ENCODE measurements at regions of chr5 and their contacts with region 1.

Region 1: DNA sequence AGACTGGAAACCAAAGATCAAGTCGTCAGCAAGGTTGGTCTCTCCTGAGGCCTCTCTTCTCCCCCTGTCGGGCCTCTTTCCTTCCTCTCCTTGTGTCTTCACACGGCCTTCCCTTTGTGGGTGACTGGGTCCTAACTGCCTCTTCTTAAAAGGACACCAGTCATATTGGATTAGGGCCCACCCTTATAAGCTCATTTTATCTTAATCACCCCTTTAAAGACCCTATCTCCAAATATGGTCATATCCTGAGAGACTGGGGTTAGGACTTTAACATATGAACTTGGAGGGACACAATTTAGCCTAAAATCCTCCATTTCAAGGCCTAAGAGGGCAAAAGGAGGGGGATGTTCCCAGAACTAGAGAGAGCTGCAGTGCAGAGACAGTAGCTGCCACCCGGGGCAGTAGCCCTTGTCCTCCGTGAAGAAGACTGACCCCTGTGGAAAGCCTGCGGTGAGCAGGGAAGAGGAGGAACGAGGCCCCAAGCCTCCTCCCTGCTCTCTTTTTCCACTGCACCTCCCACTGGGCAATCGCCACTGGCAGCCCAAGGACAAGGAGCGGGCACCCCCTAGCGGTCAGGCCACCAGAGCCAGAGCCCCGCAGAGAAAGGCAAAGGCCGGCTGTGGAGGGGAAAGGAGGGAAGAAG is 34.9 kb downstream of the CFAP90 start:
- DNase-seq: peak; percentile 80
- H3K4me3 ChIP-seq: peak overlapping the region in 1 of 2 experiments; percentile 51; a peak in 1 of 4 replicates
- H3K27ac ChIP-seq: no peak overlapping the region
- H3K4me1 ChIP-seq: no peaks in the 10 kb centered on the region; a peak in 1 of 4 replicates
- H3K27me3 ChIP-seq: peaks cover 58% of the 10 kb centered on the region; the same call in 1 of the 2 replicates
- CTCF ChIP-seq: peak; percentile 75
- EP300 ChIP-seq: no peak
- RAD21 ChIP-seq: peak; percentile 65

Region 2: DNA sequence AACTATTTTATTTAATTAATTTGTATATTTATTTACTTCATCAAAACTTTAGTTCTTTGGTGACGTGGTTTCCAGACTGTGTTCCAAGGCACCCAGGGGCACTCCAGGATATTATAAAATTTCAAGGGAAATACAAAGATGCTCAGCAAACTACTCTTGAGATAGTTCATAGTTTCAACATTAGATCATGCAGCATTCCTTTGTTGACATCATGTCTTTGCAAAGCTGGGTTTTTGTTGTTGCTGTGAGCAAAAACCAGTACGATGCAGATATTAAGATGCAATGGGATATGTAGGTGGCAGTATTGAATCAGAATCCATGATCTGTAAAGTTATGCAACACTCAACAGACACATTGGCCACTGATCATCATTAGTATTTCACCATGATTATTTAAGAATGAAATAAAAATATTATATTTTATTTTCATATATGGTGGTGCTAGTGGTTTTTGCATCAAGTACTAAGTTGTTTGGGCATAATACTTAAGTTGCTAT is 200.4 kb before region 1 on chr5:
- CTCF ChIA-PET with region 1: no interaction called
- POLR2A ChIA-PET with region 1: no interaction called
- DNase-seq: no peak
- H3K4me3 ChIP-seq: no peak overlapping the region
- H3K27ac ChIP-seq: no peak overlapping the region
- H3K4me1 ChIP-seq: no peaks in the 10 kb centered on the region
- H3K27me3 ChIP-seq: no peaks in the 10 kb centered on the region
- CTCF ChIP-seq: no peak
- EP300 ChIP-seq: no peak
- RAD21 ChIP-seq: no peak

Region 3: DNA sequence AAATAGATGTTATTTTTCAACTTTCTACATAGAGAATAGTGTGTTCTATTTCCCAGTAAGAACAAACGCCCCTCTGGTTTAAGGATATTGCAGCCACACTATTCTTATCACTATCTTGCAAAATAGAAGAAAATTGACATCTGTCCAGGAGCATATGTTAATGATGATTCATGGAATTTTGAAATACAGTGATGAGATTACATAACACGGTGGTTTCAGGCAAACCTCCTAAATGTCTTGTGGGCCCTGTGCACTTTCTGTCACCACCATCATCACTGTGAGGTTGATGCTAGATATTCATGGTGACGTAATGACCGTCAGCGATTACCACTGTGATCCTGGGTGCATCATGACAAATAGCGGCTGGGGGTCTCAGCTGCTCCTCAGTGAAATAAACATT is 13.2 kb before region 1 on chr5:
- CTCF ChIA-PET with region 1: interaction called, 13 read pairs
- POLR2A ChIA-PET with region 1: no interaction called
- DNase-seq: no peak
- H3K4me3 ChIP-seq: no peak overlapping the region
- H3K27ac ChIP-seq: no peak overlapping the region
- H3K4me1 ChIP-seq: no peaks in the 10 kb centered on the region
- H3K27me3 ChIP-seq: 0 out of 2 replicates have a peak, but pooled peaks cover 11% of the 10 kb centered on the region
- CTCF ChIP-seq: no peak
- EP300 ChIP-seq: no peak
- RAD21 ChIP-seq: no peak

Region 4: DNA sequence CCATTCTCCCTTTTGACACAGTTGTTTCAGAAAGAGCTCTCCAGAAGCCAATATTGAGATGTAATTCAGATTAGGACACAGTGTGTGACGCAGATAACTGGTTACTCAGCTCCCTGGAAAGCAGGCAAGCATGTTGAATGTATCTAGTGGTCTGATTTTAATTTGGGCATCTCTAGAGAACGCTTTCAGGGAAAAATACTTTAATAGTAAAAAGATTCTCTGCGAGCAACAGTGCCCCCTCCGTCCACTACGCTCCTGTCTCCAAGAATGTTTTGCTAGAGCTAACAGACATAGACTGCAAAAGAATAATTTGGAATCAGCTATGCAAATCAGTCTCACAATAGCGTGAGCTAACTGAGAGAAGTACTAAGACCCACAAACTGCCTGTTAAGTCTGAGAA is 11.6 kb after region 1 on chr5:
- CTCF ChIA-PET with region 1: interaction called, 39 read pairs
- POLR2A ChIA-PET with region 1: no interaction called
- DNase-seq: peak; percentile 49
- H3K4me3 ChIP-seq: no peak overlapping the region
- H3K27ac ChIP-seq: no peak overlapping the region
- H3K4me1 ChIP-seq: peaks cover 0 to 2% of the 10 kb centered on the region in 2 experiments; a peak in 1 of 4 replicates
- H3K27me3 ChIP-seq: peaks cover 40% of the 10 kb centered on the region; the same call in 1 of the 2 replicates
- CTCF ChIP-seq: peak; percentile 54
- EP300 ChIP-seq: no peak
- RAD21 ChIP-seq: peak; percentile 26; the same call in 1 of the 2 replicates

Measured in SK-N-SH (cell line).